ENCODE measurements at regions of chr19 and their contacts with region 1.

Region 1: DNA sequence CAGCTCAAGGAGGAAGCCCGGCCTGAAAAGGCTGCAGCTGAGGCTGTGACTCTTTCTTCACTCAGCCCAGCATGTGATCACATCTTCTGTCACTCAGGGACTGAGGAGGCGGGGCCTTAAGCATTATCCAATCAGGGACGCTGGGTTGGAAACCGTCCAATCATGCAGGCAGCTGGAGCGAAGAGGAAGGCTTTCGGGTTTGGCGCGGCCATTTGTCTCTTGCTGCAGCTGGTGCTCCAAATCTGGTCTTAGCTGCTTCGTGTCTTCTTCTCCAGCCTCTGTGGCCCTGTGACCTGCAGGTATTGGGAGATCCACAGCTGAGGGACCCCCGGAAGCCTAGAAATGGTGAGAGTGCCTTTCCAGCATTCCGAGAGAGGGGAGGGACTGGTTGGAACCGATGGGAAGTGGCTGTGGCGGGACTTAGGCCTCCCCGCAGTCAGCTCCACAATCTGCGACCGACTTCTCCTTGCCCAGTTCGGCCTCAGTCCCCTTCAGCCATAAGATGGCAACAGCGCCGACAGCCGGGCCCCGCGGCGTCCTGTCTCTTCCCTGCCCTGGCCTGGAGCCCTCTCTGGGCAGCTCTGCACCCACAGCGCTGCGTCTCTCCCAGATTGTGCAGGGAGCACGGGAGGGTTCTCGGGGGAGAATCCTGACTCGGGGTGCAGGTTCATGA is at the start of gene ZNF90:
- DNase-seq: peak; percentile 69 to 94 (median 80)
- ATAC-seq: peak; percentile 100
- H3K4me3 ChIP-seq: peak within 1 kb of the TSS; percentile 60
- H3K4me3 Mint-ChIP-seq: peak within 1 kb of the TSS; percentile 92
- H3K27ac ChIP-seq: no peak within 1 kb of the TSS
- H3K27ac Mint-ChIP-seq: peak within 1 kb of the TSS; percentile 55
- H3K4me1 ChIP-seq: peaks cover 14% of the 10 kb centered on the region
- H3K4me1 Mint-ChIP-seq: peaks cover 20% of the 10 kb centered on the region
- H3K27me3 ChIP-seq: no peaks in the 10 kb centered on the region
- H3K27me3 Mint-ChIP-seq: no peaks in the 10 kb centered on the region
- CTCF ChIP-seq: no peak
- total RNA-seq, gene ZNF90: 2.9 to 3.7 TPM

Region 2: DNA sequence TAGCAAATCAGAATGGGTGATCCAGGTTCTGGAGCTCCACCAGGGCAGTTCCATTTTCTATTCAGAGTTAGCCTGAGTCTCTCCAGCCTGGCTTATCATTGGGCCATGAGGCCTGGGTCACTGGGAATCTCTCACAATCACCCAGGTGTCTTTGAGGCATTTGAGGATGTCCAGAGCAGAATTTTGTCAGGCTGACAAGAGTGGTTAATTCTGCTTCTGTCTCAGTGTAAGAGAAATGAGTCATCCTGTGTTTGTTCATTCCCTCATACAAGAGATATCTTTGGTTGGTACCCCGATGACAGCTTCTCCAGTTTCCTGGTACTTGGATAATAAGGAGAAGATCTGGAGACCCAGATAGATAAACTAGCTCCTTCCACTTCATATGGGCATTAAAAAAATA is 166.8 kb before region 1 on chr19:
- CTCF ChIA-PET with region 1: no interaction called
- POLR2A ChIA-PET with region 1: no interaction called
- intact Hi-C with region 1: no loop called
- DNase-seq: no peak
- ATAC-seq: no peak
- H3K4me3 ChIP-seq: no peak overlapping the region
- H3K4me3 Mint-ChIP-seq: no peak overlapping the region
- H3K27ac ChIP-seq: no peak overlapping the region
- H3K27ac Mint-ChIP-seq: no peak overlapping the region
- H3K4me1 ChIP-seq: no peaks in the 10 kb centered on the region
- H3K4me1 Mint-ChIP-seq: peaks cover 17% of the 10 kb centered on the region
- H3K27me3 ChIP-seq: no peaks in the 10 kb centered on the region
- H3K27me3 Mint-ChIP-seq: no peaks in the 10 kb centered on the region
- CTCF ChIP-seq: no peak

Region 3: GRCh38 chr19:20044663-20045062 is 33.3 kb before region 1 on chr19:
- CTCF ChIA-PET with region 1: no interaction called
- POLR2A ChIA-PET with region 1: interaction called, 24 read pairs
- intact Hi-C with region 1: loop called (anchors 1 to 5 kb)
- DNase-seq: no peak
- ATAC-seq: no peak
- H3K4me3 ChIP-seq: no peak overlapping the region
- H3K4me3 Mint-ChIP-seq: no peak overlapping the region
- H3K27ac ChIP-seq: no peak overlapping the region
- H3K27ac Mint-ChIP-seq: no peak overlapping the region
- H3K4me1 ChIP-seq: peaks cover 2% of the 10 kb centered on the region
- H3K4me1 Mint-ChIP-seq: peaks cover under 1% of the 10 kb centered on the region
- H3K27me3 ChIP-seq: peaks cover 0 to 5% of the 10 kb centered on the region in 2 experiments
- H3K27me3 Mint-ChIP-seq: peaks cover 15% of the 10 kb centered on the region
- CTCF ChIP-seq: no peak

Region 4: DNA sequence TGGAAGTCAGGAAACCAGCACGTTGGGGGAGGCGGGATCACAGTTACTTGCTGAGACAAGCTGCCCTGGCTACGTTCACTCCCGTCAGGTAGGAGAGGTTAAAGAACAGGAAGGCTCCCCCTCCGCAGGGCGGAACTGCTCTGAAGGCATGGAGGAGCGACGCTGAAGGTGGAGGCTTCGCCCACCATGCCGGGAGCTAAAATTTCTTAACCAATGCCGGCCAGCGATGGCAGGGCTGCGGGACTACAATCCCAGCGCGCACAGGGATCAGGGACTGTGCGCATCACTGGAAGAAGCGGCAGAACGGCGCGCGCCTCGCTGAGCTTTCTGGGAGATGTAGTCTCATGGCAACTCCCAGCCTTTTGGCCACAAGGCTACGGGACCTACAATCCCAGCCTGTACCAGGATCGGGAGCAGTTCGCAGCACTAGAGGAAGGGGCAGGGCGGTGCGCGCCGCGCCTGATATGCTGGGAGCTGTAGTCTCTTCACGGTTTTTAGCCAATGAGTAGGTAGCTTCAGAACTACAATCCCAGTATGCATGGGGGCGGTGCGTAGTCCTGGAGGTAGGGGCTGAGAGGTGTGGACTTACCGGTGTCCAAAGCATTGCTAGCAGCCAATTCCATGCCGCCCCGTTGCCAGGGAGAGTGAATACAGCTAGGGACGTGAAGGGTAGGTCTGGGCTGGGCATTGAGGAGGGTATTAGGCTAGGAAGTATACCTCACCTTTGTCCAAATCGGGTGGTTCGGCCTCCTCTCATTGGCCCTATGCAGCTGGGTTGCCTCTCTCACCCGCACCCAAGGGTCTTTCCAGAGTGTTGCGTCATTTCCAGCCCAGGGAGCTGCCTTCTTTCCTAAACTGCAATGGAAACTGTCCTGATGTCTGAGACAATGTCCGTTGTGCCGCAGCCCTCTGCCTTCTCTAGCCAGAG is 25.8 kb before region 1 on chr19:
- CTCF ChIA-PET with region 1: interaction called, 3 read pairs
- POLR2A ChIA-PET with region 1: interaction called, 28 read pairs
- intact Hi-C with region 1: no loop called
- DNase-seq: peak; percentile 29 to 77 (median 50)
- ATAC-seq: peak; percentile 93
- H3K4me3 ChIP-seq: peak overlapping the region; percentile 95
- H3K4me3 Mint-ChIP-seq: peak overlapping the region; percentile 99
- H3K27ac ChIP-seq: peak overlapping the region; percentile 67 to 73
- H3K27ac Mint-ChIP-seq: peak overlapping the region; percentile 90
- H3K4me1 ChIP-seq: peaks cover 15% of the 10 kb centered on the region
- H3K4me1 Mint-ChIP-seq: peaks cover 18% of the 10 kb centered on the region
- H3K27me3 ChIP-seq: no peaks in the 10 kb centered on the region
- H3K27me3 Mint-ChIP-seq: peaks cover 4% of the 10 kb centered on the region
- CTCF ChIP-seq: no peak